ENCODE measurements at regions of chr11 and their contacts with region 1.

Region 1: GRCh38 chr11:69088676-69089146 is 40.0 kb downstream of the TPCN2 start:
- DNase-seq: peak; percentile 90 to 94
- H3K4me3 ChIP-seq: no peak overlapping the region
- H3K4me3 Mint-ChIP-seq: no peak overlapping the region
- H3K27ac Mint-ChIP-seq: no peak overlapping the region
- H3K4me1 ChIP-seq: no peaks in the 10 kb centered on the region
- H3K4me1 Mint-ChIP-seq: no peaks in the 10 kb centered on the region
- H3K27me3 ChIP-seq: no peaks in the 10 kb centered on the region
- H3K27me3 Mint-ChIP-seq: no peaks in the 10 kb centered on the region
- CTCF ChIP-seq: peak; percentile 97 to 98

Region 2: GRCh38 chr11:68632802-68633201 is 455.9 kb before region 1 on chr11:
- CTCF ChIA-PET with region 1: no interaction called
- POLR2A ChIA-PET with region 1: no interaction called
- intact Hi-C with region 1: loop called (anchors 10 kb)
- DNase-seq: peak; percentile 74 to 77
- H3K4me3 ChIP-seq: no peak overlapping the region
- H3K4me3 Mint-ChIP-seq: no peak overlapping the region
- H3K27ac Mint-ChIP-seq: no peak overlapping the region
- H3K4me1 ChIP-seq: no peaks in the 10 kb centered on the region
- H3K4me1 Mint-ChIP-seq: no peaks in the 10 kb centered on the region
- H3K27me3 ChIP-seq: no peaks in the 10 kb centered on the region; the same call in 1 of the 2 replicates
- H3K27me3 Mint-ChIP-seq: peaks cover 25% of the 10 kb centered on the region
- CTCF ChIP-seq: peak; percentile 79 to 96

Region 3: GRCh38 chr11:68825571-68825970 is 263.1 kb before region 1 on chr11:
- CTCF ChIA-PET with region 1: no interaction called
- POLR2A ChIA-PET with region 1: no interaction called
- intact Hi-C with region 1: loop called (anchors 1 kb)
- DNase-seq: peak; percentile 68 to 74
- H3K4me3 ChIP-seq: no peak overlapping the region
- H3K4me3 Mint-ChIP-seq: no peak overlapping the region
- H3K27ac Mint-ChIP-seq: no peak overlapping the region
- H3K4me1 ChIP-seq: no peaks in the 10 kb centered on the region
- H3K4me1 Mint-ChIP-seq: no peaks in the 10 kb centered on the region
- H3K27me3 ChIP-seq: no peaks in the 10 kb centered on the region
- H3K27me3 Mint-ChIP-seq: no peaks in the 10 kb centered on the region
- CTCF ChIP-seq: peak; percentile 30 to 72

Region 4: GRCh38 chr11:68950268-68950667 is 138.4 kb before region 1 on chr11:
- CTCF ChIA-PET with region 1: no interaction called
- POLR2A ChIA-PET with region 1: no interaction called
- intact Hi-C with region 1: loop called (anchors 1 kb)
- DNase-seq: peak in 1 of 2 experiments; percentile 61
- H3K4me3 ChIP-seq: no peak overlapping the region
- H3K4me3 Mint-ChIP-seq: no peak overlapping the region
- H3K27ac Mint-ChIP-seq: no peak overlapping the region
- H3K4me1 ChIP-seq: no peaks in the 10 kb centered on the region
- H3K4me1 Mint-ChIP-seq: no peaks in the 10 kb centered on the region
- H3K27me3 ChIP-seq: no peaks in the 10 kb centered on the region
- H3K27me3 Mint-ChIP-seq: peaks cover 3% of the 10 kb centered on the region
- CTCF ChIP-seq: peak; percentile 62 to 79